Heart right ventricle (tissue), 16 donors: ENCODE measurements at regions of chr13 and their contacts with region 1.

Region 1: GRCh38 chr13:100913143-100913542 is 238.5 kb upstream of the TMTC4 start:
- DNase-seq: no peak
- ATAC-seq: no peak
- H3K4me3 ChIP-seq: no peak overlapping the region
- H3K27ac ChIP-seq: no peak overlapping the region
- H3K4me1 ChIP-seq: no peaks in the 10 kb centered on the region
- H3K27me3 ChIP-seq: no peaks in the 10 kb centered on the region
- CTCF ChIP-seq: no peak

Region 2: GRCh38 chr13:100689191-100689590 is 224.0 kb before region 1 on chr13:
- intact Hi-C with region 1: no loop called
- DNase-seq: no peak
- ATAC-seq: no peak
- H3K4me3 ChIP-seq: no peak overlapping the region
- H3K27ac ChIP-seq: no peak overlapping the region
- H3K4me1 ChIP-seq: no peaks in the 10 kb centered on the region
- H3K27me3 ChIP-seq: peaks cover 0 to 6% (median 0%) of the 10 kb centered on the region in 7 donors
- CTCF ChIP-seq: no peak

Region 3: GRCh38 chr13:100941377-100942368 is 28.5 kb after region 1 on chr13:
- intact Hi-C with region 1: loop called in 1 of 10 experiments (anchors 1 kb)
- DNase-seq: no peak
- ATAC-seq: no peak
- H3K4me3 ChIP-seq: no peak overlapping the region
- H3K27ac ChIP-seq: no peak overlapping the region
- H3K4me1 ChIP-seq: no peaks in the 10 kb centered on the region
- H3K27me3 ChIP-seq: no peaks in the 10 kb centered on the region
- CTCF ChIP-seq: no peak